Sciatic nerve (tissue), 2 donors: ENCODE measurements at regions of chr11 and their contacts with region 1.

Region 1: DNA sequence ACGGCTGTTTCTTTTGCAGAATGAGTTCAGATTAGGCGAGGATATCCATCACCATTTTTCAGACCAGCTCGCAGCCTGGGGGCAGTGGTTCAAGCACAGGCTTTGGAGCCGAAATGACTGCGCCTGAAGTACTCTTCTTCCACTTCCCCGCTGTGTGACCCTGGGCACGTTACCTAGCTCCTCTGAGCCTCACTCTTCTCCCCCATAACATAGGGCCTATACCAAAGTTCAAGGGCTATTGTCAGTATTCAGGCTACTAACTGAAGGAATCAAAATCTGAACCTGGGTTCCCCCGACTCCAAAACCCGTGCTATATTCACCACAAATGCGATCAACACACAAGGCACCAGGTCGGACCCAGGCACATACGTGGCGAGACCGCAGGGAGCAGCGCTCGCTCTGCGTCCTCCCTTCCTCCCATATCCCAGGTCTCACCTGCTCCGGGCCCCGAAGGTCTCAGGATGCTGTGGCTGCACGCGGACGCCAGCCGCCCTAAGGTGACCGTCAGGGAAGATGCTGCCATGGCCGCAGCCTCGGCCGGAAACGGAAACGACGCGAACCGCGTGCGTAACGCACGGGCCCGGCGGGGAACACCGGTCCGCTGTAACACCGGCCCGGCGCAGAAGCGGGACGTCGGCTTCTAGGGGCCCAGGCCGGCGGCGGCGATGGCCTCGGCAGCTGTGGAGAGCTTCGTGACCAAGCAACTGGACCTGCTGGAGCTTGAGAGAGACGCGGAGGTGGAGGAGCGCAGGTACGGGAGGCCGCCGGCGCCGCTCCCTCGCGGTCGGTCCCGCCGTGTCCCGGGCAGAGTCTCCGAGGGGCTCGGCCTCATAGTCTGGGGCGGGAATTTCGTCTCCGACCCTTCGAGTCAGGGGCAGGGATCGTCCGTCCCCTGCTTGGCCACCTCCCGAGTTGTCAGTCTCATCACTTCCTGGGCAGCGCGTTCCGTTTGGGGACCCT is at the starts of genes IGHMBP2 and MRPL21:
- DNase-seq: peak; percentile 90
- ATAC-seq: peak; percentile 98
- total RNA-seq, gene IGHMBP2: 27.0 TPM
- total RNA-seq, gene MRPL21: 30.7 TPM

Region 2: GRCh38 chr11:68632802-68633201 is 270.8 kb before region 1 on chr11:
- intact Hi-C with region 1: no loop called
- DNase-seq: no peak
- ATAC-seq: no peak

Region 3: DNA sequence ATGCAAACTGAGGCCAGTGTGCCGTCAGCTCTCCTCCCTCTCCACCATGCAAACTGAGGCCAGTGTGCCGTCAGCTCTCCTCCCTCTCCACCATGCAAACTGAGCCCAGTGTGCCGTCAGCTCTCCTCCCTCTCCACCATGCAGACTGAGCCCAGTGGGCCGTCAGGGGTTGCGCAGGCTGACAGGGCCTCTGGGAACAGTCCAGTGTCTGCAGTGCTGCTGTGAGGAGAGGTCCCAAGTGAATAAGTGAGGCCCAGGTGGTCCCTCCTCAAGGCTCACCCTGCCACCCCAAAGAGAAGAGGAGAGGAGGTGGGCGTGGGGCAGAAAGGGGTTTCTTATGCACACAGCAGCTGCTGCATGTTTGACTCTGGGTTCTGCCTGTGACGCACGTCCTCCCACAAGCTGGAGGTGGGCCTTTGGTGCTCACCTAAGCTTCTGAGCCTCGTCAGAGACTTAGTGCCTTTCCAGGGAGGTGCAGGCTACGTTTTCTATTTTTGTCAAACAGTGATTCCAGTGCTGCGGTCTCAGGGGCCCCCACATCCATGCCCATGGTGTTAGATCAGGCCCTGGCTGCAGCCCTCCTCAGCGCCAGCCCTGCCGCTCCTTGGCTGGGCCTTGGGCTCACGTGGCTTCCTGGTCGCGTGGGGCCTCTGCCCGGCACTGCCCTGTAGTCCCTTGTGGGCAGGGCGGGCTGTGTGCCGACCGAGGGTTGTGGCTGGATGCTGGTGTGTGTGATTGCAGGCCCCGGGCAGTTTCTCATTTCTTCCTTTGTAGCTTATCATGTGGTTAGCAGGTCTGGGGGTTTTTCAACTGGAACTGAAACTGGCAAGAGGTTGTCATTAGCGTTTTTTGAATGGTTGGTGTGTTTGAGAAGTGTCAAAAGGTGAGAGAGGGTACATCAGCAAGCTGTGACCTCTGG is 152.3 kb after region 1 on chr11:
- intact Hi-C with region 1: loop called (anchors 10 kb)
- DNase-seq: no peak
- ATAC-seq: peak; percentile 67

Region 4: GRCh38 chr11:69088676-69089146 is 185.1 kb after region 1 on chr11:
- intact Hi-C with region 1: loop called (anchors 10 kb)
- DNase-seq: peak; percentile 87
- ATAC-seq: peak; percentile 72